H1 (cell line): ENCODE measurements at regions of chr6 and their contacts with region 1.

Region 1: DNA sequence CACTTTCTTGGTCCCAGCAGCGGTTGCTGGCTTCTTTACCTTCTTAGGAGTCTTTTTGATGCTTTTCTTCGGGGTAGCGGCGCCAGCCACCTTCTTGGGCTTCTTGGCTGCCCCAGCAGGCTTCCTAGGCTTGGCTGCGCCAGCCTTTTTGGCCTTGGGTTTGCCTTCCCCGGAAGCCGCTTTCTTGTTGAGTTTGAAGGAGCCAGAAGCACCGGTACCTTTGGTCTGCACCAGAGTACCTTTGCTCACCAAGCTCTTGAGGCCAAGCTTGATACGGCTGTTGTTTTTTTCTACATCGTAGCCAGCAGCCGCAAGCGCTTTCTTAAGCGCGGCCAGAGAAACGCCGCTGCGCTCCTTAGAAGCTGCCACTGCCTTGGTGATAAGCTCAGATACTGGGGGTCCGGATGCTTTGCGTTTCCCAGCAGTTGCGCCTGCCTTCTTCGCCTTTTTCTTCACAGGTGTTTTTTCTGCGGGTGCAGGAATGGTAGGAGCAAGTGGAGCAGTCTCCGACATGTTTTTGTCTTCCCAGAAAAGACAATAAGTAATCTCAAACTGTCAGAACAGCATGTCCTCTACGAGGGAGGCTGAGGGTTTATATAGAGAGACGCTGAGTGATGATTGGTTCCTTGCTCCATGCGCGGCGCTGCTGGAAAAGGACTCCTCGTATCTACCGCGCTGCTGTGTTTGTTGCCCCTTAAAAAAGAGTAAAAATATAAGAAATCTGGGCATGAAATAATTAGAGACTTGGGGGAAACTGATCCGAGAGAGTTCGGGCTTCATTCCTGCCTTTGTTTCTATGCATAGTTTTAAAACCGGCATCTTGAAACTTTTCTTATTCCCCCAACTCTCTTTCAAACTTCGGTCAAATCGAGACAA is 130.3 kb upstream of the BTN3A2 start:
- DNase-seq: peak in 1 of 2 experiments; percentile 85
- H3K4me3 ChIP-seq: peak overlapping the region; percentile 83 to 91 (median 88)
- H3K27ac ChIP-seq: peak overlapping the region; percentile 93
- H3K4me1 ChIP-seq: peaks cover 0 to 3% (median 0%) of the 10 kb centered on the region in 4 experiments; a peak in 3 of 7 replicates
- H3K27me3 ChIP-seq: no peaks in the 10 kb centered on the region
- CTCF ChIP-seq: no peak
- EP300 ChIP-seq: no peak
- POLR2A ChIP-seq: peak; percentile 86
- RAD21 ChIP-seq: no peak

Region 2: GRCh38 chr6:24658573-24659511 is 1575.8 kb before region 1 on chr6:
- CTCF ChIA-PET with region 1: no interaction called
- POLR2A ChIA-PET with region 1: no interaction called
- DNase-seq: no peak
- H3K4me3 ChIP-seq: peak overlapping the region in 1 of 4 experiments; percentile 13; a peak in 1 of 8 replicates
- H3K27ac ChIP-seq: no peak overlapping the region
- H3K4me1 ChIP-seq: peaks cover 2 to 3% (median 2%) of the 10 kb centered on the region in 4 experiments; a peak in 4 of 7 replicates
- H3K27me3 ChIP-seq: no peaks in the 10 kb centered on the region
- CTCF ChIP-seq: no peak
- EP300 ChIP-seq: no peak
- POLR2A ChIP-seq: no peak
- RAD21 ChIP-seq: no peak

Region 3: GRCh38 chr6:25835442-25836283 is 399.0 kb before region 1 on chr6:
- CTCF ChIA-PET with region 1: no interaction called
- POLR2A ChIA-PET with region 1: no interaction called
- DNase-seq: no peak
- H3K4me3 ChIP-seq: no peak overlapping the region
- H3K27ac ChIP-seq: no peak overlapping the region
- H3K4me1 ChIP-seq: no peaks in the 10 kb centered on the region
- H3K27me3 ChIP-seq: no peaks in the 10 kb centered on the region
- CTCF ChIP-seq: no peak
- EP300 ChIP-seq: no peak
- POLR2A ChIP-seq: no peak
- RAD21 ChIP-seq: no peak

Region 4: GRCh38 chr6:26175428-26176181 is 59.1 kb before region 1 on chr6:
- CTCF ChIA-PET with region 1: interaction called, 4 read pairs
- POLR2A ChIA-PET with region 1: interaction called, 18 read pairs
- DNase-seq: peak in 1 of 2 experiments; percentile 54
- H3K4me3 ChIP-seq: 0 out of 8 replicates have a peak overlapping the region, but pooled peaks of 1 of the 4 experiments have one; percentile 14
- H3K27ac ChIP-seq: no peak overlapping the region
- H3K4me1 ChIP-seq: peaks cover 0 to 2% (median 0%) of the 10 kb centered on the region in 4 experiments; a peak in 3 of 7 replicates
- H3K27me3 ChIP-seq: no peaks in the 10 kb centered on the region
- CTCF ChIP-seq: peak in 2 of 3 experiments; percentile 51 to 65; a peak in 2 of 4 replicates
- EP300 ChIP-seq: no peak
- POLR2A ChIP-seq: no peak
- RAD21 ChIP-seq: peak; percentile 79 to 83

Region 5: DNA sequence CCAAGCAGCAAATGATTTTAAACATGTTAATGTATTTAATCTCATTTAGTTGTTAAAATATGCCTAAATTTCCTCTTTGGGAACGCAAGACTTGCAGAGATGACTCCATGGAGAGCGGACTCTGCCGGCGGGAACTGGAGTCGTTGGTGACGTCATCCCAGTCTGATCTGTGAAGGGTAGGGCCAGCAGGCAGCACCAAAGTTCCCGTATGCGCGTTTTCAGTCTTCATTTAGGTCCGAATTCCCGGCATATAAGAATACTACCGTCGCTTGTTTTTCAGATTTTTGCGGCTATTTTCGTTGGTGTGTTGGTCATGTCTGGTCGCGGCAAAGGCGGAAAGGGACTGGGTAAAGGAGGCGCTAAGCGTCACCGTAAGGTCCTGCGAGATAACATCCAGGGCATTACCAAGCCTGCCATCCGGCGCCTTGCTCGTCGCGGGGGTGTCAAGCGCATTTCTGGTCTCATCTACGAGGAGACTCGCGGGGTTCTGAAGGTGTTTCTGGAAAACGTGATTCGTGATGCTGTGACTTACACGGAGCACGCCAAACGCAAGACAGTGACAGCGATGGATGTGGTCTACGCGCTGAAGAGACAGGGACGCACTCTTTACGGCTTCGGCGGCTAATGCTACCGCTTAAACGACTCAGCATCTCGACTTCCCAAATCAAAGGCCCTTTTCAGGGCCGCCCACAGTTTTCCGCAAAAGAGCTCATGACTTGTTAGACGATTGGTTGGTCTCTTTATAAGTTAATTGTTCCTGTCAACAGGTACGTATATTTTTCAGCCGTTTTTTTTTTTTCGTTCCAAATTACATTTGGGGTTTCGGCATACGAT is 30.1 kb before region 1 on chr6:
- CTCF ChIA-PET with region 1: no interaction called
- POLR2A ChIA-PET with region 1: interaction called, 477 read pairs
- DNase-seq: peak; percentile 88 to 97
- H3K4me3 ChIP-seq: peak overlapping the region; percentile 64 to 94 (median 82)
- H3K27ac ChIP-seq: peak overlapping the region; percentile 98
- H3K4me1 ChIP-seq: peaks cover 0 to 15% (median 5%) of the 10 kb centered on the region in 4 experiments; a peak in 6 of 7 replicates
- H3K27me3 ChIP-seq: no peaks in the 10 kb centered on the region
- CTCF ChIP-seq: peak in 1 of 3 experiments; percentile 18; a peak in 1 of 4 replicates
- EP300 ChIP-seq: peak; percentile 13 to 95; a peak in 2 of 3 replicates
- POLR2A ChIP-seq: peak; percentile 99 to 100
- RAD21 ChIP-seq: 0 out of 4 replicates have a peak, but pooled peaks of 1 of the 2 experiments have one; percentile 14

Region 6: GRCh38 chr6:26223650-26224546 is 10.8 kb before region 1 on chr6:
- CTCF ChIA-PET with region 1: interaction called, 10 read pairs
- POLR2A ChIA-PET with region 1: interaction called, 453 read pairs
- DNase-seq: no peak
- H3K4me3 ChIP-seq: peak overlapping the region; percentile 61 to 94 (median 76)
- H3K27ac ChIP-seq: peak overlapping the region; percentile 91
- H3K4me1 ChIP-seq: peaks cover 0 to 7% (median 3%) of the 10 kb centered on the region in 4 experiments; a peak in 5 of 7 replicates
- H3K27me3 ChIP-seq: no peaks in the 10 kb centered on the region
- CTCF ChIP-seq: no peak
- EP300 ChIP-seq: no peak
- POLR2A ChIP-seq: peak; percentile 48 to 76; a peak in 2 of 3 replicates
- RAD21 ChIP-seq: no peak

Region 7: DNA sequence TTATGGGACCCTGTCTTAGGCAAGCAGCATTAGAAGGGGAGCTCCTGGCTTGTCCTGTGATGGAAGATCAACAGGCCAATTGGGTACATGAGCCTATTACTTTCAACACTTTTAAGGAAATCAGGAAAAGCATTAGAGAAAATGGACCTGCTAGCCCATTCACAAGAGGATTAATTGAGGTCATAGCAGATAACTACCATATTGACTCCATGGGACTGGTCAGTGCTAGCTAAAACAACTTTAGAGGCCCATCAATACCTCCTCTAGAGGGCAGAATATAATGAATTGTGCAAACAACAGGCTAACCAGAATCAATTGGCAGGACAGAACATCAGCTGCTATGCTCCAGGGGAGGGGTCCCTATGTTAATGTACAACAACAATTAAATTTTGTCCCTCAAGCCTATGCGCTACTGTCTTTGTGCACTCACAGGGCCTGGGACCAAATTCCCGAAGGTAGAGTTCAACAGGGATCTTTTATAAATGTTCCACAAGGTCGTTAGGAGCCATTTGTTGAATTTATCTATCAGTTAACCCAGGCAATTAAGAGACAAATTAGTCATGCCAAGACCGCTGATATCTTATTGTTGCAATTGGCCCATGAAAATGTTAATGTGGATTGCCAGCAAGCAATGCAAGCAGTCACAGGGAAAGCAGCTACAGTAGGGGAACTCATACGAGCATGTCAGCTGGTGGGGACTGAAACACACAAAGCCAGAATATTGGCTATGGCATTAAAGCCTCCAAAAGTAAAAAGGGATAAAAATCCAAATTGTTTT is 23.7 kb after region 1 on chr6:
- CTCF ChIA-PET with region 1: interaction called, 6 read pairs
- POLR2A ChIA-PET with region 1: interaction called, 347 read pairs
- DNase-seq: no peak
- H3K4me3 ChIP-seq: no peak overlapping the region
- H3K27ac ChIP-seq: no peak overlapping the region
- H3K4me1 ChIP-seq: peaks cover 0 to 4% (median 0%) of the 10 kb centered on the region in 4 experiments; a peak in 1 of 7 replicates
- H3K27me3 ChIP-seq: no peaks in the 10 kb centered on the region
- CTCF ChIP-seq: peak in 2 of 3 experiments; percentile 9 to 36; a peak in 2 of 4 replicates
- EP300 ChIP-seq: no peak
- POLR2A ChIP-seq: no peak
- RAD21 ChIP-seq: peak in 1 of 2 experiments; percentile 31; a peak in 1 of 4 replicates

Region 8: DNA sequence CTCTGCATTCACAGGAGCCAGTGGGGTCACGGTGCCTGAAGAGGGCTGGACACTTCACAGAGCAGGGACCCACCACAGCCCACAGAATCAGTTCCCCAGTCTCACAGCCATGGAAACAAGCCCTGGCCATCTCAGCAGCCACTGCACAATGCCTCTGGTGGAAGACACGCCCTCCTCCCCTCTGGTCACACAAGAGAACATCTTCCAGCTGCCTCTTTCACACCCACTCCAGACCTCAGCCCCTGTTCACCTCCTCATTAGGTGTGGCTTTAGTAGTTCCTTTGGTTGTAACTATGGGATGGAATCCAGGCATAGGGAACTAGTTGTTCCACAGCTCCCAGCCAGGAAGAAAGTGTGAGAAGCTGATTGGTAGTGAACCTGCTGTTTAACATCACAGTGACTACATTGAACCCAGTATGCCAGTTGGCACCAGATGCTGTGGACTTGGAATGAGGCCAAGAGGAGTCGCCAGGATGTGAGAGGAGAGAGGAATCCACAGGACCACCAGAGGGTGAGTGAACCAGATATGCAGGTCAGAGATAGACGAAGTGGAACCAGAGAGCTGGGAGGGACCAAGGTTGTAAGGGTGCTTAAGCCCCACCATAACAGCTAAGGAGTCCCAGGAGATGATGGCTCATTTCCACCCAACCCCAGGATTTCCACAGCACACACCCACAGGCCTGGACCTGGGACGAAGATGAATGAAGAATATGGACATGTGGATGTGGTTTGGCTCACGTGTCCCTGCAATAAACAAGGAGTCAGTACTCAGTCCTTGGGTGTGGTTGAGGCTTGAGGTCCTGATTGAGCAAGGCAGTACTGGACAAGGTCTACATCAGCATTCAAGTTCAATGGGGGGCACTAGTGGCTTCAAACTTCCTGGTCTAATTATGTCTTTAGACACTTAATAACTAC is 196.9 kb after region 1 on chr6:
- CTCF ChIA-PET with region 1: no interaction called
- POLR2A ChIA-PET with region 1: no interaction called
- DNase-seq: no peak
- H3K4me3 ChIP-seq: no peak overlapping the region
- H3K27ac ChIP-seq: no peak overlapping the region
- H3K4me1 ChIP-seq: no peaks in the 10 kb centered on the region
- H3K27me3 ChIP-seq: no peaks in the 10 kb centered on the region
- CTCF ChIP-seq: no peak
- EP300 ChIP-seq: no peak
- POLR2A ChIP-seq: no peak
- RAD21 ChIP-seq: no peak

Region 9: GRCh38 chr6:26537846-26538571 is 303.4 kb after region 1 on chr6 and contains the start of gene HMGN4:
- CTCF ChIA-PET with region 1: no interaction called
- POLR2A ChIA-PET with region 1: no interaction called
- DNase-seq: peak in 1 of 2 experiments; percentile 87
- H3K4me3 ChIP-seq: peak within 1 kb of the TSS; percentile 73 to 87 (median 80)
- H3K27ac ChIP-seq: peak within 1 kb of the TSS; percentile 84
- H3K4me1 ChIP-seq: peaks cover 0 to 4% (median 3%) of the 10 kb centered on the region in 4 experiments; a peak in 5 of 7 replicates
- H3K27me3 ChIP-seq: no peaks in the 10 kb centered on the region
- CTCF ChIP-seq: no peak
- EP300 ChIP-seq: no peak
- POLR2A ChIP-seq: peak in 1 of 2 experiments; percentile 65; a peak in 1 of 3 replicates
- RAD21 ChIP-seq: no peak
- total RNA-seq, gene HMGN4: 61.9 and 66.4 TPM in 2 replicates

Region 10: DNA sequence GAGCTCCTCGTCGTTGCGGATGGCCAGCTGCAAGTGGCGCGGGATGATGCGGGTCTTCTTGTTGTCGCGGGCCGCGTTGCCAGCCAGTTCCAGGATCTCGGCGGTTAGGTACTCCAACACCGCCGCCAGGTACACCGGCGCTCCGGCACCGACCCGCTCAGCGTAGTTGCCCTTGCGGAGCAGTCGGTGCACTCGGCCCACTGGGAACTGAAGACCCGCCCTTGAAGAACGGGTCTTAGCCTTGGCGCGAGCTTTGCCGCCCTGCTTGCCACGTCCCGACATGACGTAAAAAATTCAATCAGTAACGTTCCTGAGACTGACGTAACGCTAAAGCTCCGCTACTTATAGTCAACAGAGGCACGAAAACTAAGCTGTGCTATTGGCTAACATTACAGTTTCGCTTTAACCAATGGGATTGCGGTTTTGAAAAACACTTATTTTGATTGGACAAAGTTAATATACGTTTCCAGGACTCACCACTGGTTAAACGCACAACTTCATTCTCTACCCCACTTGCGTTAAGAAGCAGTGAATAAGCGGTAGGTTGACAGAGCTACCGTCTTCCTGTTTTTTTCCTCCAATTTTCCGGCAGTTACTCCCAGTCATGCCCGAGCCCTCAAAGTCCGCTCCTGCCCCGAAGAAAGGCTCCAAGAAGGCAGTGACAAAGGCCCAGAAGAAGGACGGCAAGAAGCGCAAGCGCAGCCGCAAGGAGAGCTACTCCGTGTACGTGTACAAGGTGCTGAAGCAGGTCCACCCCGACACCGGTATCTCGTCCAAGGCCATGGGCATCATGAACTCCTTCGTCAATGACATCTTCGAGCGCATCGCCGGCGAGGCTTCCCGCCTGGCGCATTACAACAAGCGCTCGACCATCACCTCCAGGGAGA is 1603.6 kb after region 1 on chr6:
- CTCF ChIA-PET with region 1: no interaction called
- POLR2A ChIA-PET with region 1: interaction called, 11 read pairs
- DNase-seq: peak; percentile 76 to 87
- H3K4me3 ChIP-seq: peak overlapping the region; percentile 77 to 96 (median 93)
- H3K27ac ChIP-seq: peak overlapping the region; percentile 98
- H3K4me1 ChIP-seq: peaks cover 0 to 5% (median 2%) of the 10 kb centered on the region in 4 experiments; a peak in 1 of 7 replicates
- H3K27me3 ChIP-seq: no peaks in the 10 kb centered on the region
- CTCF ChIP-seq: no peak
- EP300 ChIP-seq: no peak
- POLR2A ChIP-seq: peak; percentile 88 to 91
- RAD21 ChIP-seq: no peak

Region 11: GRCh38 chr6:27871924-27872638 is 1637.4 kb after region 1 on chr6:
- CTCF ChIA-PET with region 1: no interaction called
- POLR2A ChIA-PET with region 1: interaction called, 61 read pairs
- DNase-seq: peak in 1 of 2 experiments; percentile 89
- H3K4me3 ChIP-seq: peak overlapping the region; percentile 61 to 73 (median 67)
- H3K27ac ChIP-seq: peak overlapping the region; percentile 96
- H3K4me1 ChIP-seq: peaks cover 0 to 16% (median 9%) of the 10 kb centered on the region in 4 experiments; a peak in 5 of 7 replicates
- H3K27me3 ChIP-seq: no peaks in the 10 kb centered on the region
- CTCF ChIP-seq: peak in 2 of 3 experiments; percentile 22 to 26; a peak in 3 of 4 replicates
- EP300 ChIP-seq: no peak; a peak in 1 of 3 replicates
- POLR2A ChIP-seq: peak; percentile 97 to 98
- RAD21 ChIP-seq: no peak